ENCODE measurements at regions of chr11 and their contacts with region 1.

Region 1: GRCh38 chr11:57493507-57494503 is 21.7 kb downstream of the SLC43A1 start:
- DNase-seq: no peak
- ATAC-seq: peak; percentile 62

Region 2: GRCh38 chr11:57530596-57531507 is 37.0 kb after region 1 on chr11 and contains the start of gene TIMM10:
- intact Hi-C with region 1: loop called (anchors 1 kb)
- DNase-seq: peak; percentile 98
- ATAC-seq: peak; percentile 99
- total RNA-seq, gene TIMM10: 58.1 TPM